GM12878 (cell line): ENCODE measurements at regions of chr18 and their contacts with region 1.

Region 1: GRCh38 chr18:49967171-49967570 is 153.8 kb upstream of the ACAA2 start:
- DNase-seq: peak; percentile 53
- ATAC-seq: peak; percentile 91
- H3K4me3 ChIP-seq: no peak overlapping the region
- H3K27ac ChIP-seq: no peak overlapping the region
- H3K4me1 ChIP-seq: no peaks in the 10 kb centered on the region
- H3K27me3 ChIP-seq: peaks cover 1 to 4% of the 10 kb centered on the region in 2 experiments; a peak in 2 of 4 replicates
- CTCF ChIP-seq: no peak
- EP300 ChIP-seq: 0 out of 4 replicates have a peak, but pooled peaks of 1 of the 2 experiments have one; percentile 19
- POLR2A ChIP-seq: no peak
- RAD21 ChIP-seq: no peak

Region 2: DNA sequence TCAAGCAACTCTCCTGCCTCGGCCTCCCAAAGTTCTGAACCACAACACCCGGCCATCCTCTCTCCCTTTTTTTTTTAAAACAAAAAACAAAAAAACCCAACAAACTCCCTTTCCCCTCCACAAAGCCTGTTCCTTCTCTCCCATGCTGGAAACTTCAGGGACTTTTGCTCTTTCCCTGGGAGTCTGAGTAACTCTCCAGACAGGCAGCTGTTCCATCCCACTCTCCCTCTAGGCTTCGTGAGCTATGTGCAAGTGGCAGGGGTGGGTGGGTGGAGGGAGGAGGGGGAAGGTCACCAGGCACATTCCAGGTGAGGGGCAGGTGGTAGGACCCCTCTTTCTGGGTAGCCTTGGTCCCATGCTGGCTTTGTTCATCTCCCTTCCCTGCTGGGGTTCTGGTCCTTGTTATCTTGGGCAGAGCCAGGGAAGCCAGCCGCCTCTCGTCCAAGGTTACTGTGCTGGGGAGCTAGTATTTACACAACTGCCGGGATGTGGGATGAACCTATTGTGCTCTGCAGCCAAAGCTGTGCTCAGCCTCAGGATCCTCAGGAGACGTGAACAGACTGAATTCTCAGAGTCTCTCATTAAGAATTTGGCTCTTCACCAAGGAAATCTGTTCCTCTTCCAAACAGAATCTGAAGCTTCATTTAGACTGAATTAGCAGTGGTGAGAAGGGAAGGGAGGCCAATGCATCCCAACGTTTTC is 298.4 kb before region 1 on chr18:
- CTCF ChIA-PET with region 1: no interaction called
- POLR2A ChIA-PET with region 1: no interaction called
- RAD21 ChIA-PET with region 1: no interaction called
- SMC1A ChIA-PET with region 1: no interaction called
- in situ Hi-C with region 1: no loop called
- intact Hi-C with region 1: no loop called
- DNase-seq: no peak
- ATAC-seq: no peak
- H3K4me3 ChIP-seq: no peak overlapping the region
- H3K27ac ChIP-seq: no peak overlapping the region
- H3K4me1 ChIP-seq: no peaks in the 10 kb centered on the region
- H3K27me3 ChIP-seq: no peaks in the 10 kb centered on the region; a peak in 1 of 4 replicates
- CTCF ChIP-seq: no peak
- EP300 ChIP-seq: no peak
- POLR2A ChIP-seq: no peak
- RAD21 ChIP-seq: no peak

Region 3: GRCh38 chr18:49886891-49887764 is 80.0 kb before region 1 on chr18:
- CTCF ChIA-PET with region 1: no interaction called
- POLR2A ChIA-PET with region 1: no interaction called
- RAD21 ChIA-PET with region 1: no interaction called
- SMC1A ChIA-PET with region 1: no interaction called
- in situ Hi-C with region 1: no loop called
- intact Hi-C with region 1: no loop called
- DNase-seq: no peak
- ATAC-seq: no peak
- H3K4me3 ChIP-seq: no peak overlapping the region
- H3K27ac ChIP-seq: no peak overlapping the region
- H3K4me1 ChIP-seq: no peaks in the 10 kb centered on the region
- H3K27me3 ChIP-seq: peaks cover 0 to 3% of the 10 kb centered on the region in 2 experiments; a peak in 1 of 4 replicates
- CTCF ChIP-seq: no peak
- EP300 ChIP-seq: no peak
- POLR2A ChIP-seq: no peak
- RAD21 ChIP-seq: peak; percentile 27; the same call in 1 of the 2 replicates

Region 4: GRCh38 chr18:49911427-49911826 is 55.7 kb before region 1 on chr18:
- CTCF ChIA-PET with region 1: no interaction called
- POLR2A ChIA-PET with region 1: no interaction called
- RAD21 ChIA-PET with region 1: no interaction called
- SMC1A ChIA-PET with region 1: no interaction called
- in situ Hi-C with region 1: no loop called
- intact Hi-C with region 1: no loop called
- DNase-seq: no peak
- ATAC-seq: no peak
- H3K4me3 ChIP-seq: no peak overlapping the region
- H3K27ac ChIP-seq: no peak overlapping the region
- H3K4me1 ChIP-seq: no peaks in the 10 kb centered on the region
- H3K27me3 ChIP-seq: peaks cover 0 to 3% of the 10 kb centered on the region in 2 experiments; a peak in 1 of 4 replicates
- CTCF ChIP-seq: no peak
- EP300 ChIP-seq: no peak
- POLR2A ChIP-seq: no peak
- RAD21 ChIP-seq: no peak

Region 5: GRCh38 chr18:49949951-49950395 is 17.2 kb before region 1 on chr18:
- CTCF ChIA-PET with region 1: interaction called, 4 read pairs
- POLR2A ChIA-PET with region 1: interaction called, 4 read pairs
- RAD21 ChIA-PET with region 1: interaction called, 4 read pairs
- SMC1A ChIA-PET with region 1: interaction called, 12 read pairs
- in situ Hi-C with region 1: no loop called
- intact Hi-C with region 1: no loop called
- DNase-seq: no peak
- ATAC-seq: peak; percentile 36
- H3K4me3 ChIP-seq: no peak overlapping the region
- H3K27ac ChIP-seq: no peak overlapping the region
- H3K4me1 ChIP-seq: no peaks in the 10 kb centered on the region
- H3K27me3 ChIP-seq: peaks cover 0 to 2% of the 10 kb centered on the region in 2 experiments; a peak in 2 of 4 replicates
- CTCF ChIP-seq: no peak
- EP300 ChIP-seq: no peak
- POLR2A ChIP-seq: no peak
- RAD21 ChIP-seq: no peak